ENCODE measurements at regions of chr17 and their contacts with region 1.

Region 1: DNA sequence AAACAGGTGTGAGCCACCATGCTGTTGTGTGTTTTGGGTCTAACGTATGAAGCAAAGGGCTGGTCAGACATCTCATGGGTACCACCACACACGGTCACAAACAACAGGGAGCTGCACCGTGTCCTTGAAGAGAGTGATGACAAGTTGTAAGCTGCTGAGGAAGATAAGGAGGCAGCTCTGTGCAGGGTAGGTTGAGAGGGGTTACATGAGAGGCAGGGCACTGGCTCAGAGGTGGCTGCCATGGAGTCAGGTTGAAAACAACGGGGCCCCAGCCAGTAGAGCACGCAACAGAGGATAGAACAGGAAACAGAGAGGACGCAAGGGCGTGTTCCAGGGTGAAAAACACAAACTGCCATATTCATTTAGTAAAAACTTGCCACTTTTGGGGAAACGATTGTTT is 52.2 kb downstream of the TRARG1 start:
- DNase-seq: peak in 8 of 14 experiments; percentile 5 to 41 (median 24)
- ATAC-seq: peak; percentile 97
- H3K4me3 ChIP-seq: no peak overlapping the region
- H3K4me3 Mint-ChIP-seq: peak overlapping the region; percentile 3
- H3K27ac ChIP-seq: no peak overlapping the region
- H3K27ac Mint-ChIP-seq: no peak overlapping the region
- H3K4me1 ChIP-seq: peaks cover 14% of the 10 kb centered on the region
- H3K4me1 Mint-ChIP-seq: peaks cover 12% of the 10 kb centered on the region
- H3K27me3 ChIP-seq: peaks cover 0 to 7% of the 10 kb centered on the region in 2 experiments
- H3K27me3 Mint-ChIP-seq: no peaks in the 10 kb centered on the region
- CTCF ChIP-seq: no peak

Region 2: GRCh38 chr17:1122533-1123392 is 208.9 kb before region 1 on chr17:
- CTCF ChIA-PET with region 1: interaction called, 5 read pairs
- POLR2A ChIA-PET with region 1: no interaction called
- intact Hi-C with region 1: loop called (anchors 2 kb)
- DNase-seq: peak; percentile 65 to 89 (median 84)
- ATAC-seq: peak; percentile 99
- H3K4me3 ChIP-seq: no peak overlapping the region
- H3K4me3 Mint-ChIP-seq: no peak overlapping the region
- H3K27ac ChIP-seq: no peak overlapping the region
- H3K27ac Mint-ChIP-seq: no peak overlapping the region
- H3K4me1 ChIP-seq: peaks cover 15% of the 10 kb centered on the region
- H3K4me1 Mint-ChIP-seq: peaks cover 8% of the 10 kb centered on the region
- H3K27me3 ChIP-seq: no peaks in the 10 kb centered on the region
- H3K27me3 Mint-ChIP-seq: peaks cover 6% of the 10 kb centered on the region
- CTCF ChIP-seq: peak; percentile 91

Region 3: GRCh38 chr17:1206026-1206777 is 125.5 kb before region 1 on chr17:
- CTCF ChIA-PET with region 1: no interaction called
- POLR2A ChIA-PET with region 1: no interaction called
- intact Hi-C with region 1: no loop called
- DNase-seq: peak in 2 of 14 experiments; percentile 60 to 72
- ATAC-seq: no peak
- H3K4me3 ChIP-seq: no peak overlapping the region
- H3K4me3 Mint-ChIP-seq: no peak overlapping the region
- H3K27ac ChIP-seq: no peak overlapping the region
- H3K27ac Mint-ChIP-seq: no peak overlapping the region
- H3K4me1 ChIP-seq: peaks cover 23% of the 10 kb centered on the region
- H3K4me1 Mint-ChIP-seq: peaks cover 10% of the 10 kb centered on the region
- H3K27me3 ChIP-seq: no peaks in the 10 kb centered on the region
- H3K27me3 Mint-ChIP-seq: peaks cover 9% of the 10 kb centered on the region
- CTCF ChIP-seq: no peak

Region 4: GRCh38 chr17:1260086-1260769 is 71.5 kb before region 1 on chr17:
- CTCF ChIA-PET with region 1: interaction called, 24 read pairs
- POLR2A ChIA-PET with region 1: interaction called, 8 read pairs
- intact Hi-C with region 1: loop called (anchors 1 kb)
- DNase-seq: no peak
- ATAC-seq: no peak
- H3K4me3 ChIP-seq: peak overlapping the region; percentile 53
- H3K4me3 Mint-ChIP-seq: peak overlapping the region; percentile 30
- H3K27ac ChIP-seq: no peak overlapping the region
- H3K27ac Mint-ChIP-seq: no peak overlapping the region
- H3K4me1 ChIP-seq: peaks cover 31% of the 10 kb centered on the region
- H3K4me1 Mint-ChIP-seq: peaks cover 27% of the 10 kb centered on the region
- H3K27me3 ChIP-seq: peaks cover 14 to 21% of the 10 kb centered on the region in 2 experiments
- H3K27me3 Mint-ChIP-seq: peaks cover 32% of the 10 kb centered on the region
- CTCF ChIP-seq: no peak

Region 5: GRCh38 chr17:1275962-1276736 is 55.6 kb before region 1 on chr17:
- CTCF ChIA-PET with region 1: interaction called, 13 read pairs
- POLR2A ChIA-PET with region 1: no interaction called
- intact Hi-C with region 1: loop called (anchors 1 kb)
- DNase-seq: peak; percentile 58 to 86 (median 70)
- ATAC-seq: peak; percentile 76
- H3K4me3 ChIP-seq: no peak overlapping the region
- H3K4me3 Mint-ChIP-seq: no peak overlapping the region
- H3K27ac ChIP-seq: no peak overlapping the region
- H3K27ac Mint-ChIP-seq: no peak overlapping the region
- H3K4me1 ChIP-seq: peaks cover 8% of the 10 kb centered on the region
- H3K4me1 Mint-ChIP-seq: no peaks in the 10 kb centered on the region
- H3K27me3 ChIP-seq: peaks cover 13 to 15% of the 10 kb centered on the region in 2 experiments
- H3K27me3 Mint-ChIP-seq: peaks cover 35% of the 10 kb centered on the region
- CTCF ChIP-seq: peak; percentile 85

Region 6: DNA sequence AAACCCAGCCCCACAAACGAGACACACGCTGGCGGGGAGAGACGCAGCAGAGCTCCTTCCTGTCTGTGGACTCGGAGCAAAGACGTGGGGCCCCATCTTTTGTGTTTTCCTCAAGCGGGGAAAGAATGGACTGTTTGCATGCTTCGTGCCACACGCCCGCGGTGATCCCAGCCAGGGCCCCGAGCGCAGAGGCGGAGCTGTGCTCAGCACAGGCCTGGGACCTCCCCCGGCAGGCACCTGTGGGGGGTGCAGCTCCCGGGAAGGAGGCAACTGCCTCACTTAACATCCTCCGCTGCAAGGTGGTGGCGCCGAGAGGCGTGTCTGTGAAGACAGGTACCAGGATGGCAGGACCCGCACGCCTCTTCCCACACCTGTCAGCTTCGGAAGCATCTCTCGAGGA is 33.1 kb before region 1 on chr17:
- CTCF ChIA-PET with region 1: interaction called, 5 read pairs
- POLR2A ChIA-PET with region 1: interaction called, 4 read pairs
- intact Hi-C with region 1: loop called in 1 of 2 experiments (anchors 5 kb)
- DNase-seq: peak; percentile 10 to 70 (median 42)
- ATAC-seq: peak; percentile 45
- H3K4me3 ChIP-seq: peak overlapping the region; percentile 35
- H3K4me3 Mint-ChIP-seq: peak overlapping the region; percentile 54
- H3K27ac ChIP-seq: no peak overlapping the region
- H3K27ac Mint-ChIP-seq: no peak overlapping the region
- H3K4me1 ChIP-seq: peaks cover 61% of the 10 kb centered on the region
- H3K4me1 Mint-ChIP-seq: peaks cover 40% of the 10 kb centered on the region
- H3K27me3 ChIP-seq: peaks cover 2 to 7% of the 10 kb centered on the region in 2 experiments
- H3K27me3 Mint-ChIP-seq: peaks cover 5% of the 10 kb centered on the region
- CTCF ChIP-seq: no peak

Region 7: GRCh38 chr17:1315891-1316403 is 15.8 kb before region 1 on chr17:
- CTCF ChIA-PET with region 1: no interaction called
- POLR2A ChIA-PET with region 1: no interaction called
- intact Hi-C with region 1: no loop called
- DNase-seq: no peak
- ATAC-seq: no peak
- H3K4me3 ChIP-seq: no peak overlapping the region
- H3K4me3 Mint-ChIP-seq: no peak overlapping the region
- H3K27ac ChIP-seq: no peak overlapping the region
- H3K27ac Mint-ChIP-seq: no peak overlapping the region
- H3K4me1 ChIP-seq: no peaks in the 10 kb centered on the region
- H3K4me1 Mint-ChIP-seq: no peaks in the 10 kb centered on the region
- H3K27me3 ChIP-seq: peaks cover 8 to 11% of the 10 kb centered on the region in 2 experiments
- H3K27me3 Mint-ChIP-seq: peaks cover 11% of the 10 kb centered on the region
- CTCF ChIP-seq: no peak

Region 8: DNA sequence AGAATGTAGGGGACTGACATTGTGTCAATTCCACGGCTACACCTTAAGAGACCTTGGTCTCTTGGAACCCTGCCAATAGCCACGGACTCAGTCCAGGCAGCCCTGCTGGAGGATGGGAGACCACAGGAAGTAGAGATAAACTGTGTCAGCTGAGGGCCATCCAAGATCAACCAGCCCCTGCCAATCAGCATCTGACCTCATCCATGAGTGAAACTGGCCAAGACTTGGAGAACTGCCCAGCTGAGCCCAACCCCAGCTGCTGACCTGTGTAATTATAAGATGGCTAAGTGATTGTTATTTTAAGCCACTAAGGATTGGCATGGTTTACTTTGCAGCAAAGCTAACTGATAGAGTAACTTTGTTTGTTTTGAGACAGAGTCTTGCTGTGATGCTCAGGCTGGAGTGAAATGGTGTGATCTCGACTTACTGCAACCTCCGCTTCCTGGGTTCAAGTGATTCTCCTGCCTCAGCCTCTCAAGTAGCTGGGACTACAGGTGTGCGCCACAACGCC is 81.6 kb after region 1 on chr17:
- CTCF ChIA-PET with region 1: no interaction called
- POLR2A ChIA-PET with region 1: no interaction called
- intact Hi-C with region 1: no loop called
- DNase-seq: no peak
- ATAC-seq: no peak
- H3K4me3 ChIP-seq: no peak overlapping the region
- H3K4me3 Mint-ChIP-seq: no peak overlapping the region
- H3K27ac ChIP-seq: no peak overlapping the region
- H3K27ac Mint-ChIP-seq: no peak overlapping the region
- H3K4me1 ChIP-seq: no peaks in the 10 kb centered on the region
- H3K4me1 Mint-ChIP-seq: no peaks in the 10 kb centered on the region
- H3K27me3 ChIP-seq: no peaks in the 10 kb centered on the region
- H3K27me3 Mint-ChIP-seq: no peaks in the 10 kb centered on the region
- CTCF ChIP-seq: no peak